ENCODE measurements at regions of chr6 and their contacts with region 1.

Region 1: DNA sequence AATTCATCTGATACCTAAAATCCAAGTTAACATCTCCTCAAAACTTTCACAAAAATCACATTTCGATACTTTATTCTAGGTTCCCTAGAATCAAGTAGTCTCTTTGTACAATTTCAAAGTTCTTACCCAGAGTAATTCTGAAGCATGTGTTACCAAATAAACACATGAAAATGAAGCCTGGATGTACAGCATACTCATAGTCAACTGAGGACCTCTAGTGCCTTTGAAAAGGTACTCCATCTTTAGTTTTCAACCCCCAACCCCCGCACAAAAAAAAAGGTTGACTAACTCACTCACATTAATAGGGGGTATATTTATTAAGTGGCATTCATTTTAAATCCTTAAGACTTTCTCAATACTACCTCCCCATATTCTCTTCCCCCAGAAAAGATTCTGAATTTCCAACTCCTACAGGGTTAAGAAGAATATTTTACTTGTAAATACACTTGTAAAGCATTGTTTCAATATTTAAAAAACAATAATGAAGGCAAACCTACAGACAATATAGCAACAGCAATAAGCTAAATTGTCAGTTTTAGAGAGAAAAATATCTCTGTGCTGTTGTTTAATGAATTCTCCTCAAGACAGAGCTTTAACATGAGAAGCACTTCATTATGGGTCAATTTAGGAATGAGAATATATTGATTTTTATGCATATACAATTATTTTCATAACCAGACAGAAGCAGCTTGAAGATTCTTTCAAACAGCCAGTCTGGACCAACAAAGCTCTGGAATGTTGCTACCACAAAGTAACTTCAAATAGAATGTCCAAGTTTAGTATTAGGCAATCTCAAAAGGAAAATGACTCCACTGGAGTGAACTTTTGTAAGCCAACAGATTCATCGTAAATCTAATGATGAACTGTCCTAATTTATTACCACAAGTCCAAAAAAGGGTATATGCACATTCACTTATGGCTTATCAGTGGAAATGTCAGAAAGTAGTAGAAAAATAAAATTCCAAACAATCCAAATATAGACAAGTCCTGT is 3.3 kb downstream of the PLN start:
- DNase-seq: peak; percentile 79
- ATAC-seq: peak; percentile 84
- H3K4me3 ChIP-seq: no peak overlapping the region
- H3K27ac ChIP-seq: no peak overlapping the region
- H3K4me1 ChIP-seq: peaks cover 3% of the 10 kb centered on the region
- H3K27me3 ChIP-seq: no peaks in the 10 kb centered on the region
- CTCF ChIP-seq: peak; percentile 80
- POLR2A ChIP-seq: no peak
- RAD21 ChIP-seq: peak; percentile 81

Region 2: DNA sequence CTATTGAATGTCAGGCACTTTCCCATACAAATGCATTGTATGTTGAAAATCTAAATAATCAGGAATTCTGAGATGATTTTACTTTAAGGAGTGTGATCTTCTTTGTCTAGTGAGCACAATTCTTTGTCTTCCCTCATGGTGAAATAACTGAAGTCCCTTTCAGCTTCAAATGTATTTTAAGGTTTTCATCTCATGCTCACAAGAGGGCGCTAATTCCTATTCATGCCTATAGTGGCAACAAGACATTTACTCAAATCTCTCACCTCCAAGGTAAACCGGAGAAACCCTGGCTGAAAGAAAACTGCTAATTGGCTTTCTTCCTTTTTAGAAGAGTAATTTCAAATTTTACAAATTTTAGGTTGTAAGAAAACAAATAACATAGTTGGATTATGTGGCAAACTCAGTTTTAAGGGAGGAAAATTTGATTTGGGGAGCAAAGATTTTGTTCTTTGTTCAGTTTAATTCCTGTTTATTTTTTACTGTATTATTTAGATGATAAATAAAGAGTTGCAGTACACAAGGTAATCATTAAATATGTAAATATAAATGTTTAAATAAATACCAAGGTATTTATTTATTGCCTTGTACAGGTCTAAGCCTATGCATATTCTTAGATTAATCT is 575.2 kb before region 1 on chr6:
- CTCF ChIA-PET with region 1: no interaction called
- POLR2A ChIA-PET with region 1: no interaction called
- dilution Hi-C with region 1: no loop called
- in situ Hi-C with region 1: no loop called
- intact Hi-C with region 1: loop called (anchors 2 kb)
- DNase-seq: peak; percentile 44
- ATAC-seq: peak; percentile 37; the same call in 1 of the 2 replicates
- H3K4me3 ChIP-seq: no peak overlapping the region
- H3K27ac ChIP-seq: no peak overlapping the region
- H3K4me1 ChIP-seq: no peaks in the 10 kb centered on the region
- H3K27me3 ChIP-seq: no peaks in the 10 kb centered on the region
- CTCF ChIP-seq: peak; percentile 53
- POLR2A ChIP-seq: no peak
- RAD21 ChIP-seq: peak; percentile 35

Region 3: DNA sequence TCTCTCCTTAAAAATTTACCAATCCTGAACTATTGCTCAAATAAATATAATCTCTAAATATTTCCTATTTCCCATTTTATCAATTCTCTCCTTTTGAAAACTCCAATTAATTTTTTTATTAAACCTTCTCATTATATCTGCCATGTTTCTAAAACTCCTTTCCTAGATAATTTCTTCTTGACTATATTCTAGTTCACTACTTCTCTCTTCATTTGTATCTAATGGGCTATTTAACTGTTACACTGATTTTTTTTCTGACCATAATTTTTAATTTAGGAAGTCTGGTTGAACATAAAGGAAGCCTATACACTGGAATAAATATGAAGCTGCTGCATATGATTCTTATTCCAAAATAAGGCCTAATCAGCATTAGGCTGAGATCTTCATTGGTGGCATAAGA is 99.5 kb before region 1 on chr6:
- CTCF ChIA-PET with region 1: no interaction called
- POLR2A ChIA-PET with region 1: no interaction called
- dilution Hi-C with region 1: no loop called
- in situ Hi-C with region 1: no loop called
- intact Hi-C with region 1: no loop called
- DNase-seq: no peak
- ATAC-seq: no peak
- H3K4me3 ChIP-seq: no peak overlapping the region
- H3K27ac ChIP-seq: no peak overlapping the region
- H3K4me1 ChIP-seq: no peaks in the 10 kb centered on the region
- H3K27me3 ChIP-seq: no peaks in the 10 kb centered on the region
- CTCF ChIP-seq: no peak
- POLR2A ChIP-seq: no peak
- RAD21 ChIP-seq: no peak

Region 4: DNA sequence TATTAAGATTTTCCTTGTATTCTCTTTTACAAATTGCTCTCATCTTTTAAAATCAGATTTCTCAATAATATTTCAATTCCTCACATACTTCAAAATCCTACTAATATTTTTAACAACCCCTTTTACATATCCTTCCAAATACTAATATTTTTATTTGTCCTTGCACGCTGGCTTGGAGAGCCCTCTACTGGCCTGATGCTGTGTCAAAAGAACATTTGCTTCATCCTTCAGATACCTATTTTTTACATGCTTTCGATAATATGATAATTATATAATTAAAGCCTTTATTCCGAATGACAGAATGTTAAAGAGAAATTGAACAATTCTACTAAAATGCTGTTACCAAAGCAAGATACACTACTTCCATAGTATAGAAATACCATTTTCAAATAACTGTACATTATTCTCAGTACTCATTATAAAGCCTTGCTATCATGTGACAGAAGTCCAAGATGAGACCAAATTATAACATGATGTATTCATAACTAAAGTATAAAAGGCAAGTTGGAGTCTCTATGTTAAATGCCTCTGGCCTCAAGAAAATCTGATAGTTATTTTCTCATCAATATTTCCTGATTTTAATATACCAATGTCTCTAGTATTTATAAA is 42.2 kb before region 1 on chr6:
- CTCF ChIA-PET with region 1: no interaction called
- POLR2A ChIA-PET with region 1: no interaction called
- dilution Hi-C with region 1: no loop called
- in situ Hi-C with region 1: no loop called
- intact Hi-C with region 1: loop called (anchors 1 kb)
- DNase-seq: peak; percentile 55
- ATAC-seq: 0 out of 2 replicates have a peak, but pooled peaks have one; percentile 48
- H3K4me3 ChIP-seq: no peak overlapping the region
- H3K27ac ChIP-seq: no peak overlapping the region
- H3K4me1 ChIP-seq: no peaks in the 10 kb centered on the region
- H3K27me3 ChIP-seq: no peaks in the 10 kb centered on the region
- CTCF ChIP-seq: peak; percentile 79
- POLR2A ChIP-seq: no peak
- RAD21 ChIP-seq: peak; percentile 73

Region 5: DNA sequence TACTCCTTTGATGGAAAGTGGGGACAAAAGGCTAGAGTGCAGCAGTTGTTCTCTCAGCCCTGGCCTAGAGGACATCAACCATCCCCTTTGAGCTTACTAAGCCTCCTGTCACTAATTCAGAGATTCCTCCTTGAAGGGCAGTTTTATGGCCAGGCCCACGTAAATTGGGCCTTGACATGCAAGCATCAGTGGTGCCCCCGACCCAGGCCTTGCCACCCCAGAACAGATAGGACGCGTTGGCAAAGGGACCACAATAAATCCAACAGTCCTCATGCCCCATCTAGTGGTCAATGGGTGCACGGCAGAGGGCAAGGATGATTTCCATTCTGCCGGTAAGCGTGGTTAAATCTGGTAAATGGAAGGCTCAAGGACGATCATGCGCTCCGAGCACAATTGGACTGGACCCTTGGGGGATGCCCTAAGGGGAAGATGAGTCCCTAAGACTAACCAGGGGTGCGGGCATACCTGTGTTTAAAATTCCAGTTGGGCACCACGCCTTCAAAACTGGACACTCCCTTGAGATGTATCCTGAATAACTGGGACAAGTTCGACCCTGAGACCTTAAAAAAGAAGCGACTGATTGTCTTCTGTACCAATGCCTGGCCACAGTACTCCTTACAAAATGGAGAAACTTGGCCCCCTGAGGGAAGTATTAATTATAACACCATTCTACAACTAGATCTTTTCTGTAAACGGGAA is 67.5 kb after region 1 on chr6:
- CTCF ChIA-PET with region 1: no interaction called
- POLR2A ChIA-PET with region 1: no interaction called
- dilution Hi-C with region 1: no loop called
- in situ Hi-C with region 1: no loop called
- intact Hi-C with region 1: loop called (anchors 10 kb)
- DNase-seq: peak; percentile 26
- ATAC-seq: peak; percentile 94
- H3K4me3 ChIP-seq: no peak overlapping the region
- H3K27ac ChIP-seq: no peak overlapping the region
- H3K4me1 ChIP-seq: no peaks in the 10 kb centered on the region
- H3K27me3 ChIP-seq: no peaks in the 10 kb centered on the region
- CTCF ChIP-seq: peak; percentile 70
- POLR2A ChIP-seq: no peak
- RAD21 ChIP-seq: peak; percentile 76

Region 6: GRCh38 chr6:118800394-118801071 is 249.2 kb after region 1 on chr6:
- CTCF ChIA-PET with region 1: no interaction called
- POLR2A ChIA-PET with region 1: no interaction called
- dilution Hi-C with region 1: no loop called
- in situ Hi-C with region 1: no loop called
- intact Hi-C with region 1: loop called (anchors 10 kb)
- DNase-seq: peak; percentile 85
- ATAC-seq: peak; percentile 99
- H3K4me3 ChIP-seq: no peak overlapping the region
- H3K27ac ChIP-seq: no peak overlapping the region
- H3K4me1 ChIP-seq: no peaks in the 10 kb centered on the region
- H3K27me3 ChIP-seq: no peaks in the 10 kb centered on the region
- CTCF ChIP-seq: peak; percentile 85
- POLR2A ChIP-seq: no peak
- RAD21 ChIP-seq: peak; percentile 71

Region 7: GRCh38 chr6:119241111-119241465 is 689.7 kb after region 1 on chr6:
- CTCF ChIA-PET with region 1: no interaction called
- POLR2A ChIA-PET with region 1: no interaction called
- dilution Hi-C with region 1: no loop called
- in situ Hi-C with region 1: no loop called
- intact Hi-C with region 1: no loop called
- DNase-seq: peak; percentile 59
- ATAC-seq: peak; percentile 81
- H3K4me3 ChIP-seq: no peak overlapping the region
- H3K27ac ChIP-seq: peak overlapping the region; percentile 2; the same call in 1 of the 2 replicates
- H3K4me1 ChIP-seq: peaks cover 4% of the 10 kb centered on the region; the same call in 1 of the 2 replicates
- H3K27me3 ChIP-seq: no peaks in the 10 kb centered on the region
- CTCF ChIP-seq: no peak
- POLR2A ChIP-seq: no peak
- RAD21 ChIP-seq: no peak

Measured in IMR-90 (cell line).